IMR-90 (cell line): ENCODE measurements at regions of chr2 and their contacts with region 1.

Region 1: DNA sequence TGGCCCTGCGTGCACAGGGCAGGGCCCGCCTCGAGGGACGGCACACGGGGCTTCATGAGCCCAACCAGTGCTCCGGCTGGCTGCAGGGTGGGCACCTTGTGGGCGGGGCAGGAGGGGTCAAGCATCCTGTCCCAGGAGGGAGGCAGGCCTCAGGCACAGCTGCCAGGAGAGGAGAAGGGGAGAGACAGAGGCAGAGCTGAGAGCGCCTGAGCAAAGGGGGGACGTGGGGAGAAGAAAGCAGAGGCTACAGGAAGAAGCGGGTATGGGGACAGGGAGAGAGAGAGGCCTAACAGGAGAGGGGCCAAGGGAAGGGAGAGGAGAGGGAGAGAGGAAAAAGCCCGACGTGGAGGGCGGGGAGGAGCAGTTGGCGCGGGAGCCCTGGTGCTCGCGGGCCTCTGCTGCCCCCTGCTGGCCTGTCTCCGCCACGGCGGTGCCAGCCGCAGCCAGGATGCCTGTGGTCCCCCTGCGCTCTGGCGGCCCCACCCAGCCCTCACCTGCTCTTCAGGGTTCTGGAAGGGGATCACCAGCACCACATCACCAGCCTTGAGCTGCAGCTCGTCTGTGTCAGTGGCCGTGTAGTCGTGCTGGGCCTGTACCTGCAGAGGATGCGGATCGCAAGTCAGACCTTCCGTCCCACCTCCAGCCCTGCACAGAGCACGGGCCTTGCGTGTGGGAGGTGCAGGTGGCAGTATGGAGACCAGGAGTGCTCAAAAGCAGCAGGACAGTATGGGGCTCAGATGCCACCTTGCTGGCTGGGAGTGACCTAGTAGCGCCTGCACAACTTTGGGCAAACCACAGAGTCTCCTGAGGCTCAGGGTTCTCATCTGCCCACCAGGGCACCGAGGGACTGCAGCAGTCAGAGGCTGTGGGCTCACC is 56.8 kb downstream of the BIN1 start:
- DNase-seq: peak; percentile 41
- ATAC-seq: peak; percentile 93
- H3K4me3 ChIP-seq: no peak overlapping the region
- H3K27ac ChIP-seq: no peak overlapping the region
- H3K4me1 ChIP-seq: peaks cover 2% of the 10 kb centered on the region; the same call in 1 of the 2 replicates
- H3K27me3 ChIP-seq: no peaks in the 10 kb centered on the region
- CTCF ChIP-seq: peak; percentile 85
- POLR2A ChIP-seq: no peak
- RAD21 ChIP-seq: peak; percentile 89

Region 2: GRCh38 chr2:126886211-126886915 is 163.8 kb before region 1 on chr2:
- CTCF ChIA-PET with region 1: no interaction called
- POLR2A ChIA-PET with region 1: no interaction called
- dilution Hi-C with region 1: no loop called
- in situ Hi-C with region 1: no loop called
- intact Hi-C with region 1: loop called (anchors 10 kb)
- DNase-seq: peak; percentile 22
- ATAC-seq: peak; percentile 96
- H3K4me3 ChIP-seq: peak overlapping the region; percentile 28
- H3K27ac ChIP-seq: no peak overlapping the region
- H3K4me1 ChIP-seq: no peaks in the 10 kb centered on the region; the same call in 1 of the 2 replicates
- H3K27me3 ChIP-seq: peaks cover 12% of the 10 kb centered on the region
- CTCF ChIP-seq: peak; percentile 57
- POLR2A ChIP-seq: no peak
- RAD21 ChIP-seq: no peak

Region 3: DNA sequence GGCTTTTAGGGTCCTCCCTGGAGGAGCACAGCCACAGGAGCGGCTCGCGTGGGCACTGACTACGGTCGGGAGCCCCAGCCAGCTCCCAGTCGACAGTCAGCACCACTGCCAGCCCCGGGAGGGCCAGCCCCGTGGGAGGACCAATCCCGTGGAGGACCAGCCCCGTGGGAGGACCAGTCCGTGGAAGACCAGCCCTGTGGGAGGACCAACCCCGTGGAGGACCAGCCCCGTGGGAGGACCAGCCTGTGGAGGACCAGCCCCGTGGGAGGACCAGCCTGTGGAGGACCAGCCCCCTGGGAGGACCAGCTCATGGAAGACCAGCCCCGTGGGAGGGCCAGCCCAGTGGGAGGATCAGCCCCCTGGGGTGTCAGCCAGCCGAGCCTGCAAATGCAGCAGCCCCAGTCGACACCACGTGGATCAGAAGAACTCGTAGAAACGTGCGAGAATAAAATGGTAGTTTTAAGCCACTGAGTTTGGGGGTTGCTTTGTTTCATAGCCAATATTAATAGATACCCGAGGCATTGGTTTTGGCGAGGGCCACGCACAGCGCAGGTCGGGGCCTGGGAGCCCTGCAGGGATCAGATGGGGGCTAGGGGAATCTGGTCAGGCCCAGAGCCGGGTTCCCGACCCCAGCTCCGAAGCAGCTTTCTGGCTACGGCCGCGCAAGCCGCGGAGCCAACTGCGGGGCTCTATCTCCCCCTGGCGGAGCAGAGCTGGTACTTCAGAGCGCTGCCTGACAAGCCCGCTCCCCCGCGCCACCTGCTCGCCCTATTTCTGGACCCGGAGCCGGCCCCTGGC is 78.5 kb before region 1 on chr2:
- CTCF ChIA-PET with region 1: interaction called, 4 read pairs
- POLR2A ChIA-PET with region 1: no interaction called
- dilution Hi-C with region 1: no loop called
- in situ Hi-C with region 1: no loop called
- intact Hi-C with region 1: loop called (anchors 1 kb)
- DNase-seq: peak; percentile 39
- ATAC-seq: peak; percentile 99
- H3K4me3 ChIP-seq: peak overlapping the region; percentile 16
- H3K27ac ChIP-seq: no peak overlapping the region
- H3K4me1 ChIP-seq: no peaks in the 10 kb centered on the region
- H3K27me3 ChIP-seq: peaks cover 45% of the 10 kb centered on the region
- CTCF ChIP-seq: peak; percentile 82
- POLR2A ChIP-seq: no peak
- RAD21 ChIP-seq: peak; percentile 82